CD8-positive, alpha-beta T cell (primary cell): ENCODE measurements at regions of chr11 and their contacts with region 1.

Region 1: DNA sequence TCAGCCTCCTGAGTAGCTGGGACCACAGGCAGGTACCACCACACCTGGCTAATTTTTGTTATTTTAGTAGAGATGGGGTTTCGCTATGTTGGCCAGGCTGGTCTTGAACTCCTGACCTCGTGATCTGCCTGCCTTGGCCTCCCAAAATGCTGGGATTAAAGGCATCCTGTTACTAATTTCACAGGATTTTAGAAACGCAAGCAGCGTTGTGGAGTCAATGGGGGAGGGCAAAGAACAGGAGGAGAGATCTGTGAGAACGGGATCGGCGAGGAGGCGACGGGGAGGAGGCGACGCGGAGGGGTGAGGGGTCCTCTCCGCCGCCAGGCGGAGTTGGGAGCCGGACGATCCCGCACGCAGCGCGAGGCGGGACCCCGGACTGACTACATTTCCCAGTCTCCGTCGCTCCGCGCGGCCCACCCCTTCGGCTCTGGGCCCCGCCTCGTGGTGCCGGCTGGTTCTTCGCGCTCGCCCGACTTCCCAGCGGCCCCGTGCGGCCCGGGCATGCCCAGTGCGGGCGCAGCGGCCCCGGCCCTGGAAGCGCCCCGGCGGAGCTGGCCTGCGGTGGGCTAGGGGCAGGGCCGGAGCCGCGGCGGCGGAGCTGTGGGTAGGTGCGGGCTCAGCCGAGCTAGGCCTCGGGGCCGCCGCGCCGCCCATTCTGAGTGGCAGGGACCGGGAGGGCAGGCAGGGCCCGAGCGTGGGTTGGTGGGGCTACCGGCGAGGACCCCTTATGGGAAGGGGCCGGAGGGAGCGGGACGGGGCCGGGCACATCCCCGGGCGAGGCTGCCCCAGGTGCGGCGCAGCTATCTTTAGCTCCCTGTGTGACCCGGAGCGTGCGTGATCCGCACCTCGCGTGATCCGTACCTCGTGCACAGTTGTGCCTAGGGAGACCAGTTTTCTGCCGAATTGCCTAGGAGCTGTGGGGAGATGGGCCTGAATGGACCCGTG is at the start of gene EI24:
- DNase-seq: peak; percentile 71 to 95 (median 86)
- ATAC-seq: peak; percentile 95
- H3K4me3 ChIP-seq: peak within 1 kb of the TSS; percentile 81 to 92
- H3K4me3 Mint-ChIP-seq: peak within 1 kb of the TSS; percentile 93
- H3K27ac ChIP-seq: peak within 1 kb of the TSS; percentile 80 to 82
- H3K27ac Mint-ChIP-seq: peak within 1 kb of the TSS; percentile 95
- H3K4me1 ChIP-seq: peaks cover 16% of the 10 kb centered on the region
- H3K4me1 Mint-ChIP-seq: peaks cover 37% of the 10 kb centered on the region
- H3K27me3 ChIP-seq: no peaks in the 10 kb centered on the region
- H3K27me3 Mint-ChIP-seq: no peaks in the 10 kb centered on the region
- CTCF ChIP-seq: peak; percentile 60
- total RNA-seq, gene EI24: 20.5 to 22.4 TPM

Region 2: DNA sequence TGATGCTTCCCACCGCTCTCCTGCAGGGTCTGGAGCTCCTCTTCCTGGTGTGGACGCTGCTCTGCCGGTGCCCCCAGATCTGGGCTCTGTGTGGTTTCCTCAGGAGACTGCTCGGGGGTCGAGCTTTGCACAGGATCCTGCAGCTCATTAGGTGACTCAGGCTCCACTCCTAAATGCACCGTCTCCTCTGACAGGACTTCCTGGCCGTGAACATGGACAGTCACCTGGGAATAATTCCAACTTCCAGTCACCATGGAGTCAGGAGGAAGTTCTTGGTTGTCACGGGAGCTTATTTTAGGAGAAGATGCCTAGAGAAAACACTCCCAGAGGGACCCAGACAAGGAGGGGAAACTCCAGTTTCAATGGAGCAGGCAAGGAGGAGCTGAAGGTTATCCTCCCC is 1839.6 kb before region 1 on chr11:
- CTCF ChIA-PET with region 1: no interaction called
- POLR2A ChIA-PET with region 1: no interaction called
- intact Hi-C with region 1: loop called in 1 of 2 experiments (anchors 10 kb)
- DNase-seq: no peak
- ATAC-seq: no peak
- H3K4me3 ChIP-seq: no peak overlapping the region
- H3K4me3 Mint-ChIP-seq: no peak overlapping the region
- H3K27ac ChIP-seq: no peak overlapping the region
- H3K27ac Mint-ChIP-seq: no peak overlapping the region
- H3K4me1 ChIP-seq: no peaks in the 10 kb centered on the region
- H3K4me1 Mint-ChIP-seq: peaks cover 3% of the 10 kb centered on the region
- H3K27me3 ChIP-seq: no peaks in the 10 kb centered on the region
- H3K27me3 Mint-ChIP-seq: no peaks in the 10 kb centered on the region
- CTCF ChIP-seq: no peak

Region 3: DNA sequence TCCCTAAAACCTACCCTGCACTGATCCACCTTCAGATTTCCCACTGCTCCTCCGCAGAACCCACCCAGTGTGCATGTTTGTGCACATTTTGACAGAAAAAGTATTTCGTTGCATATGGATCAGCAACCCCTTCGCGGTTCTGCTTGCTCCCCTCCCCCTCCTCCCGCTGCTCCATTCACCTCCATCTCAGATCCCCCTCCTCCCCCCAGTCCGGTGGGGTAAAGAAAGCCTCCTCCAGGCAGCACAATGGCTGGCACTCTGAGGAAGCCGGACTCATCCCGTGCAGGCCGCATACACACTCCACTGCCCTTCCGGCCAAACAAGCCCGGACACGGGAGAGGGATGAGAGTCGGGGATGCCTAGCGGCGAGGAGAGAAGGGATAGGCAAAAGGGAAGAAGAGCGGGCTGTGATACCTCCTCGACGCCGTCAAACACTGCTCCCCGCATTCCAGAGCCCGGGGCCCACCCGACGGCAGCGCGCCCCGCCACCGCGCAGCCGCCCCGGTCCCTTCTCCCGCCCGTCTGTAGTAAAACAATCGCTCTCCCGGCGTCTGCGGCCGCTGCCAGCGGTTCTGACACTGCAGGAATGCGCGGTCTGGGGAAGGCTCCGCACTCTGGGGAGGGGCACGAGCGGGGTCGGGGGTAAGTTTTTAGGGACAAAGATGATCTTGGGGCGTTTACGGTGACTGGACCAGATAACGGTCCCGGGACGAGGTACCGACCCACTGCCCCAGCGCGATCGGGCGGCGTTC is 74.1 kb before region 1 on chr11:
- CTCF ChIA-PET with region 1: no interaction called
- POLR2A ChIA-PET with region 1: no interaction called
- intact Hi-C with region 1: loop called in 1 of 2 experiments (anchors 5 kb)
- DNase-seq: peak in 4 of 9 experiments; percentile 15 to 51 (median 39)
- ATAC-seq: peak; percentile 27
- H3K4me3 ChIP-seq: peak overlapping the region; percentile 65 to 68
- H3K4me3 Mint-ChIP-seq: peak overlapping the region; percentile 89
- H3K27ac ChIP-seq: no peak overlapping the region
- H3K27ac Mint-ChIP-seq: no peak overlapping the region
- H3K4me1 ChIP-seq: peaks cover 15% of the 10 kb centered on the region
- H3K4me1 Mint-ChIP-seq: peaks cover 24% of the 10 kb centered on the region
- H3K27me3 ChIP-seq: peaks cover 9 to 15% of the 10 kb centered on the region in 2 experiments
- H3K27me3 Mint-ChIP-seq: peaks cover 44% of the 10 kb centered on the region
- CTCF ChIP-seq: no peak

Region 4: DNA sequence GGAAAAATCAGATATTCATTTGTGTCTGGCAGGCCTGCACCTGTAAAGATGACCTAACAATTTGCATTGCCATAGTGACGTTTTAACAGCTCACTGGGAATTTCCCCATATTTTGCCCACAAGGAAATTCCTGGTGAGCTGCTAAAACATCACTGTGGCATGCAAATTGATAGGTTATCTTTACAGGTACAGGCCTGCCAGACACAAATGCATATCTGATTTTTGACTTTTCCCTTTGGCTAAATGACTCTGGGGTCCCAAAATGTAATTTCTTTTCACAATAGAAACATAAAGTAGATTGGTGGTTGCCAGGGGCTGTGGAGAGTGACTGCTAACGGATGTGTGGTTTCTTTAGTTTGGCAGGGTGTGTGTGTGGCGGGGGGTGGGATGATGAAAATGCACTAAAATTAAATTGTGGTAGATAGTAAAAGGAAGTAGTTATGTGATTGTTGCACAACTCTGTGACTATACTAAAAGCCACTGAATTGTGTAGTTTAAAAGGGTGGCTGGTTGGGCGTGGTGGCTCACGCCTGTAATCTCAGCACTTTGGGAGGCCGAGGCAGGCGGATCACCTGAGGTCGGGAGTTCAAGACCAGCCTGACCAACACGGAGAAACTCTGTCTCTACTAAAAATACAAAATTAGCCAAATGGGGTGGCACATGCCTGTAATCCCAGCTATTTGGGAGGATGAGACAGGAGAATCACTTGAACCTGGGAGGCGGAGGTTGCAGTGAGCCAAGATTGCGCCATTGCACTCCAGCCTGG is 54.7 kb before region 1 on chr11:
- CTCF ChIA-PET with region 1: interaction called, 3 read pairs
- POLR2A ChIA-PET with region 1: interaction called, 5 read pairs
- intact Hi-C with region 1: loop called (anchors 1 to 5 kb)
- DNase-seq: peak; percentile 27 to 95 (median 53)
- ATAC-seq: peak; percentile 84
- H3K4me3 ChIP-seq: no peak overlapping the region
- H3K4me3 Mint-ChIP-seq: peak overlapping the region; percentile 30
- H3K27ac ChIP-seq: peak overlapping the region; percentile 52 to 88
- H3K27ac Mint-ChIP-seq: peak overlapping the region; percentile 89
- H3K4me1 ChIP-seq: peaks cover 35% of the 10 kb centered on the region
- H3K4me1 Mint-ChIP-seq: peaks cover 37% of the 10 kb centered on the region
- H3K27me3 ChIP-seq: no peaks in the 10 kb centered on the region
- H3K27me3 Mint-ChIP-seq: no peaks in the 10 kb centered on the region
- CTCF ChIP-seq: no peak

Region 5: GRCh38 chr11:125887373-125888324 is 318.4 kb after region 1 on chr11 and contains the start of gene HYLS1:
- CTCF ChIA-PET with region 1: interaction called, 3 read pairs
- POLR2A ChIA-PET with region 1: interaction called, 6 read pairs
- intact Hi-C with region 1: loop called in 1 of 2 experiments (anchors 2 kb)
- DNase-seq: peak; percentile 87 to 97 (median 94)
- ATAC-seq: peak; percentile 88
- H3K4me3 ChIP-seq: peak within 1 kb of the TSS; percentile 81 to 84
- H3K4me3 Mint-ChIP-seq: peak within 1 kb of the TSS; percentile 88
- H3K27ac ChIP-seq: peak within 1 kb of the TSS; percentile 61 to 87
- H3K27ac Mint-ChIP-seq: peak within 1 kb of the TSS; percentile 87
- H3K4me1 ChIP-seq: peaks cover 10% of the 10 kb centered on the region
- H3K4me1 Mint-ChIP-seq: peaks cover 31% of the 10 kb centered on the region
- H3K27me3 ChIP-seq: no peaks in the 10 kb centered on the region
- H3K27me3 Mint-ChIP-seq: no peaks in the 10 kb centered on the region
- CTCF ChIP-seq: no peak
- total RNA-seq, gene HYLS1: 1.1 to 1.2 TPM